ENCODE measurements at regions of chr12 and their contacts with region 1.

Region 1: DNA sequence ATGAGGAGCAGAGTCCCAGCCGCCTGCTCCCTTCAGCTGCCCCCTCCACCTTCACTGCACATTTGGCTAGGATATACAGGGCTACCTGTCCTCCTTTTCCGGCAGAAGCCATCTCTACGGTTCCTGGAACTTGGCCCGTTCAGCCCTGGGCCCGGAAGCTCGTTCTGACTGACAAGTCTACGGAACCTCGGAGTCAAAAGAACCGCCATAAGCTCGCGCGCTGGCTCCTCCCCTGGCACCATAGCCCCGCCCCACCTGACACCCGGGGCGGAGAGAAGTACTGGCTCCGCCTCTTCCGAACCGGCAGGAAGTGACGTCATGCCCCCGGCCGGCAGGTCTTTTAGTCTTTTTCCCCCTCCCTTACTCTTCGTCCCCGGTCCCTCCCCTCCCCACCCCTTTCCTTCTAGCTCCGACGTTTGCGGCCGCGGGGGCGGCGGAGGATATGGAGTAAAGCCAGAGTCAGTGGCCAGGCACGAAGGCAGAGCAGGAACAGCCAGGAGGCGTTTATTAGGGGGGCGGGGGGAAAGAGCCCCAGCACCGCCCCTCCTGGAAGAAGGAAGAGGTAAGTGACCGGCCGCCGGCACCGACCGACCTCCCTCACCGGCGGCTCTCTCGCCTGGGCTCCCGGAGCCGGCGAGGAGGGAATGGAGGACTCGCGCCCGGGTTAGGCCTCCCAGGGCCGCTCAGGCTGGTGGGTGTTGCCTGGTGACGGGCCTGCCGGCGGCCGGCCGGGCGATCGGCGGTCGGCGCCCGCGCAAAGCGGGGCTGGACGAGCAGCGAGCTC is at the starts of genes DEPDC4 and SCYL2:
- DNase-seq: peak; percentile 95 to 99 (median 98)
- H3K4me3 ChIP-seq: peak within 1 kb of the TSS; percentile 65 to 99 (median 93)
- H3K27ac ChIP-seq: peak within 1 kb of the TSS; percentile 15 to 98 (median 89)
- H3K27me3 ChIP-seq: no peaks in the 10 kb centered on the region
- CTCF ChIP-seq: peak in 19 of 56 donors; percentile 6 to 41 (median 17)
- total RNA-seq, gene DEPDC4: 0.29 to 5.0 (median 1.7) TPM in 116 of 120 experiments, not detected in the others
- total RNA-seq, gene SCYL2: 29.4 to 62.9 (median 43.5) TPM

Region 2: DNA sequence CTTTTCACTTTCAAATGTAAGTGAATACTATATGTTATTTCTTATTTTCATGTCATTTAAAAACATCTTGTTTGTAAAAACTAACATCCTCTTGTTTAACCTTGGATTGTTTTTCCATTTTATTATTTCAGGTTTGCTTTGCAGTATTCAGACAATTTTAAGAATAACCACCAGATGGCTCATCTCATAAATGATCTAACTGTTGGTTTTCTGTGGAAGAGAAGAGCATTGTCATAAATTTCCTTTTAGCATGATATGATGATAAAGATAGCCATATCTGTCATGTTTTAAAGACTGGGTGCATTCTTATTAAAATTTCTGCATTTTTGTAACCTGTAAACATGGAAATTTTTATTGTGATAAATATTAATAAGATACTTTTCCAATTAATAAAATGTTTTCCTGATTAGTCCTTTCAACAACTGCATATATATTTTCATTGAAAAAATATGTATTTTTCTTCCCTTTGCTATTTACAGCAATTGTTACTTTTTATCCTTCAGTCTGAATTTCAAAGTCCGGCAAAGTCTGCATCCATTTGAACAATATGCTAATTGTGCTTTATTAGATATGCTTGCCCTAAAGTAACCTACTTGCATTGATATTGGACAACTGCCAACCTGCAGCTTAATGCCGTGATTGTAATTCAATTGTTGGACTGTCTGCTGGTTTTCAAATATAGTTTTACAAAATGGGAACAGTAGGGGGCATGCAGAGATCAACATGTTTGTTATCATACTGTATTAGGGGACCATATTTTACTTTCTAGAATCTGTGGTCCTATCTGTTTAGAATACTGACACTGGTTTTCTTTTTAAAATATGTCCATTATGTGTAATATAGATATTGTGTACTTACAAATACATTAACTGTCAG is 456.1 kb before region 1 on chr12:
- intact Hi-C with region 1: loop called in 1 of 2 experiments (anchors 10 kb)
- DNase-seq: no peak
- H3K4me3 ChIP-seq: peak overlapping the region in 13 of 59 donors; percentile 6 to 45 (median 19)
- H3K27ac ChIP-seq: no peak overlapping the region
- H3K27me3 ChIP-seq: no peaks in the 10 kb centered on the region
- CTCF ChIP-seq: peak; percentile 31 to 68 (median 52)

Region 3: GRCh38 chr12:100142851-100143559 is 124.0 kb before region 1 on chr12 and contains the start of gene BLTP3B:
- intact Hi-C with region 1: loop called (anchors 5 kb)
- DNase-seq: peak; percentile 85 to 95 (median 90)
- H3K4me3 ChIP-seq: peak within 1 kb of the TSS; percentile 72 to 99 (median 93)
- H3K27ac ChIP-seq: peak within 1 kb of the TSS; percentile 85 to 100 (median 98)
- H3K27me3 ChIP-seq: no peaks in the 10 kb centered on the region
- CTCF ChIP-seq: peak in 3 of 56 donors; percentile 4 to 10 (median 9)
- total RNA-seq, gene BLTP3B: 39.2 to 87.7 (median 60.5) TPM

Region 4: DNA sequence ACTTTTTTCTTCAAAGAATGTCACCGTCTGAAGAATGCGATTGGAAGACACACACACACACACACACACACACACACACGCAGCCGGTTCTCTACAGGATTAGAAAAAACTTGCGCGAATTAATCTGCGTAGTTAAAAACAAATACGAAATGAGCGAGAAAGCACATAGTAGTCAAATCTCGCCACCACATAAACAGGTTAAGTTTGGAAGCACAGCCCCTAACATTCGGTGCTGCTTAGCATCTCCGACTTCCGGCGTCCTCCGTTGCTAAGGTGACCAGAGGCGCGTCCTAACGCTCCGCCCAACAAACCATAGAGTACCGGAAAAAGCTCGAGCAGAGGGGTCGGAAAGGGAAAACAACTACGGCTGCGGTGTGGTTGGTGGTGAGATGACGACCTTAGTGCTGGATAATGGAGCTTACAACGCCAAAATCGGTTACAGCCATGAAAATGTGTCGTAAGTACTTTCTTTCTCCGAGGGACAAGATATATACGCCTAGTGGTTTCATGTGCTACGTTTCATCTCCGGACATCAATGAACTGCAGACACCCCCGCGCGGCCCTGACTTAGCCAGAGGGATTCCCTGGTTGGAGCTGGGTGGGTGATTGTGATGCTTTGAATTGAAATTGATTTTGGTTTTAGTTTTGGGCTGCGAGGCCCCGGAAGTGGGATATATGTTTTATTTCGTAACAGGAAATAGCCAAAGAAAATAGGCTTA is 66.4 kb before region 1 on chr12 and contains the start of gene ACTR6:
- intact Hi-C with region 1: loop called in 1 of 2 experiments (anchors 10 kb)
- DNase-seq: peak; percentile 85 to 95 (median 92)
- H3K4me3 ChIP-seq: peak within 1 kb of the TSS; percentile 46 to 96 (median 85)
- H3K27ac ChIP-seq: peak within 1 kb of the TSS in 45 of 59 donors; percentile 7 to 89 (median 64)
- H3K27me3 ChIP-seq: no peaks in the 10 kb centered on the region
- CTCF ChIP-seq: peak in 35 of 56 donors; percentile 6 to 50 (median 30)
- total RNA-seq, gene ACTR6: 26.5 to 71.6 (median 48.8) TPM